ENCODE measurements at regions of chr15 and their contacts with region 1.

Region 1: GRCh38 chr15:58070801-58071418 is 5.4 kb upstream of the ALDH1A2 start:
- DNase-seq: peak; percentile 60 to 79 (median 77)
- ATAC-seq: no peak
- H3K4me3 ChIP-seq: no peak overlapping the region
- H3K27ac ChIP-seq: no peak overlapping the region
- H3K4me1 ChIP-seq: no peaks in the 10 kb centered on the region
- H3K27me3 ChIP-seq: no peaks in the 10 kb centered on the region

Region 2: GRCh38 chr15:57561041-57561711 is 509.7 kb before region 1 on chr15:
- intact Hi-C with region 1: loop called in 1 of 4 experiments (anchors 10 kb)
- DNase-seq: peak; percentile 68 to 84 (median 78)
- ATAC-seq: peak; percentile 90 to 91
- H3K4me3 ChIP-seq: no peak overlapping the region
- H3K27ac ChIP-seq: peak overlapping the region; percentile 80
- H3K4me1 ChIP-seq: peaks cover 2% of the 10 kb centered on the region
- H3K27me3 ChIP-seq: no peaks in the 10 kb centered on the region

Region 3: DNA sequence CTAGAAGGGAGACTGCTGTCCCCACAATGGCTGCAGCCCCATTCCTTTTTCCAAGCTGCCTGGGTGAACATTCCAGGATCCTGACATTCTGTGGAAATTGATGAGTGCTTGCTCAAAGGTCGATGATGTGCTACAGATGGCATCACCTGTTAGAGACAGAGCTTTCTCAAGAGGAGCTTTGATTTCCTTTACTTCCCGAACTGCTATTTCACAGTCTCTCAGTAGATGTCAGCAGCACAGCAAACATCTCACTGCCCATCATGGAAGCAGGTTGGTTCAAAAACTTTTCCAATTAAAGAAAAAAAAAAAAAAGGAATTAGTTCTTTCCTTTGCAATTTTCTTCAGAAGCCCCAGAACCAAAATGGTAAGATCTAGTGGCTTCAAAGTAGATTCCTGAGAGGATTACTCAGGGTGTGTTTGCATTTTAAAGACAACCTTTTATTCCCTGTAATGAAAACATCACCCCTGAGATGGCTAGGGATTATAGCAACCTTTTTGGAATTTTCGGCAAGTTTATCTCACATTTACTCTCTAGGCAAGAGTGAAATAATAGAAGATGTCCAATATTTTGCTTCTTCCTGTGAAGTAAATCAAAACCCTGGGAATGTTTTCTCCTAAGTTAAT is 319.6 kb before region 1 on chr15:
- intact Hi-C with region 1: loop called (anchors 5 kb)
- DNase-seq: no peak
- ATAC-seq: peak; percentile 49 to 63
- H3K4me3 ChIP-seq: no peak overlapping the region
- H3K27ac ChIP-seq: no peak overlapping the region
- H3K4me1 ChIP-seq: peaks cover 2% of the 10 kb centered on the region
- H3K27me3 ChIP-seq: no peaks in the 10 kb centered on the region

Region 4: GRCh38 chr15:57861036-57861638 is 209.8 kb before region 1 on chr15:
- intact Hi-C with region 1: loop called (anchors 2 to 5 kb)
- DNase-seq: no peak
- ATAC-seq: peak in 1 of 2 donors; percentile 45
- H3K4me3 ChIP-seq: no peak overlapping the region
- H3K27ac ChIP-seq: no peak overlapping the region
- H3K4me1 ChIP-seq: no peaks in the 10 kb centered on the region
- H3K27me3 ChIP-seq: no peaks in the 10 kb centered on the region

Region 5: GRCh38 chr15:57866149-57866736 is 204.7 kb before region 1 on chr15:
- intact Hi-C with region 1: loop called (anchors 2 to 5 kb)
- DNase-seq: peak; percentile 42 to 89 (median 77)
- ATAC-seq: peak in 1 of 2 donors; percentile 73
- H3K4me3 ChIP-seq: no peak overlapping the region
- H3K27ac ChIP-seq: no peak overlapping the region
- H3K4me1 ChIP-seq: no peaks in the 10 kb centered on the region
- H3K27me3 ChIP-seq: no peaks in the 10 kb centered on the region

Measured in right cardiac atrium (tissue), 5 donors.